Mammary epithelial cell (primary cell): ENCODE measurements at regions of chr1 and their contacts with region 1.

Region 1: DNA sequence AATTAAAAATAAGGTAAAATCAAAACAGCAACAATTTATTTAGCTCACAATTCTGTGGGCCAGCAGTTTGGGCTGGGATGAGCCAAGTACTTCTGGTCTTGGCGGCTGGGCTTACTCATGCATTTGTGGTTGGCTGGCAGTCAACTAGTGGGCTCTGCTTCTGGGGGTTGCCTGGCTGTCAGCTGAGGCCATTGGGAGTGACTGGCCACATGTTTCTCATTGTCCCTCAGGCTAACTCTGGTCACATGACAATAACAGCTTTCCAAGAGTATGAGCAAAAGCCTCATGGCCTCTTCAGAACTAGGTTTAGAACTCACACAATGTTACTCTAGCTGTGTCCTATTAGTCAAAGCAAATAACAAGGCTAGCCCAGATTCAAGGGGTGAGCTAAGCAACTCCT is 15.6 kb upstream of the CHIA start:
- DNase-seq: peak; percentile 85
- H3K4me3 ChIP-seq: no peak overlapping the region
- H3K27ac ChIP-seq: no peak overlapping the region
- H3K4me1 ChIP-seq: peaks cover 9% of the 10 kb centered on the region
- H3K27me3 ChIP-seq: peaks cover 17% of the 10 kb centered on the region
- CTCF ChIP-seq: no peak

Region 2: DNA sequence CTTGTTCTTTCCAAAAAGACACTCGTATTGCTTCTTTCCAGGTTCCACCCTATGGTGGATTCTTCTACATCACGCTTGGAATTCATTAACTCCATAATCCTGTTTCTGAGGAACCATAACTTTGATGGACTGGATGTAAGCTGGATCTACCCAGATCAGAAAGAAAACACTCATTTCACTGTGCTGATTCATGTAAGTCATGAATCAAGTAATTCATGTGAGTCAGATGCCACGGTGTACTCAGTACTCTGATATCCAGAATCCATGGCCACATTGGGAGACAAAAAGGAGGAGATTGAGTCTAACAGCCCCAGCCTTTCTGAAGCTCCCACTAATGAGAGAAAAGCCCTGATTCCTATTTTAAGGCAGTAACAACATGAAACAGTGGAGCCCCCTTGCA is 40.2 kb before region 1 on chr1:
- CTCF ChIA-PET with region 1: no interaction called
- dilution Hi-C with region 1: no loop called
- in situ Hi-C with region 1: no loop called
- intact Hi-C with region 1: loop called (anchors 5 kb)
- DNase-seq: peak; percentile 83
- H3K4me3 ChIP-seq: no peak overlapping the region
- H3K27ac ChIP-seq: peak overlapping the region; percentile 66
- H3K4me1 ChIP-seq: peaks cover 38% of the 10 kb centered on the region
- H3K27me3 ChIP-seq: no peaks in the 10 kb centered on the region
- CTCF ChIP-seq: no peak